ENCODE measurements at regions of chr17 and their contacts with region 1.

Region 1: DNA sequence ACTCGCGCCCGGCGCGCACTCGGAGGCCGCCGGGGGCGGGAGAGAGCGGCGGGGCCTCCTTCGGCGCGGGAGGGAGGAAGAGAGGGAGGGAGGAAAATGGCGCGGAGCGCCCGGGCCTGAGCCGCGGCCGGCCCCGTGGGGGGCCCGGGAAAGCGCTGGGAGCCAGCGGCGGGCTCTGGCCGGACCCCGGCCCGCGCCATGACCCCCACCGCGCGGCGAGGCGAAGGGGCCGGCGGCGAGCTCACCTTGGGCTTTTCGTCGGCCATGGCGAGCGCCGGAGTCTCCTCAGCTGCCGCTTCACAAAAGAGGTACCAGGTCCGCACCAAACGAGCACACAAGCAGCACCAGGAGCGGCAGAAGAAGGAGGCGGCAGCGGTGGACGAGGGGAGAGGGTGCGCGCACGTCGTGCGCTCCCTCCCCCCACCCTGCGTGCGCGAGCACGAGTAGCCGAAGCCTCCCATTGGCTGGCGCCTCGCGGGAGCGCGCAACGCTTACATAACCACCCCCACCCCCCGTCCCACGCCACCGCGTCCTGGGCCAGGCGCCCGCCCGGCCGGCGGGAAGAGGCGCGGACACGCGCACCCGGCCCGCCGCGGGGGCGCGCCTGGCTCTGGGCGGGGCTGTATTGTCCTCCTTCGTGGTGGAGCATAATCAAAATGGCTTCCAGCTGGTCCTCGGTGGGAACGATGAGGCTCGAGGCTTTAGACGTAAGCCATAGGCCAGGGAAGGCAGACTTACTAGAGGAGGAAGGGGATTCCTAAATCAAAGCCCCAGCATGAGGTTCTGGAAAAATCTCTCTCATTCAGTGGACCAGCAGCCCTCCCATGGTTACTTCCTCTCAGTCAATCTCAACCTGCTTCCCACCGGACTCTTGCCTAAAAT is at the start of gene SUMO2:
- DNase-seq: peak; percentile 98
- ATAC-seq: peak; percentile 85
- H3K4me3 Mint-ChIP-seq: peak within 1 kb of the TSS; percentile 97
- H3K27ac Mint-ChIP-seq: peak within 1 kb of the TSS; percentile 96
- H3K4me1 Mint-ChIP-seq: peaks cover 45% of the 10 kb centered on the region
- H3K27me3 Mint-ChIP-seq: no peaks in the 10 kb centered on the region
- total RNA-seq, gene SUMO2: 594 to 727 TPM

Region 2: DNA sequence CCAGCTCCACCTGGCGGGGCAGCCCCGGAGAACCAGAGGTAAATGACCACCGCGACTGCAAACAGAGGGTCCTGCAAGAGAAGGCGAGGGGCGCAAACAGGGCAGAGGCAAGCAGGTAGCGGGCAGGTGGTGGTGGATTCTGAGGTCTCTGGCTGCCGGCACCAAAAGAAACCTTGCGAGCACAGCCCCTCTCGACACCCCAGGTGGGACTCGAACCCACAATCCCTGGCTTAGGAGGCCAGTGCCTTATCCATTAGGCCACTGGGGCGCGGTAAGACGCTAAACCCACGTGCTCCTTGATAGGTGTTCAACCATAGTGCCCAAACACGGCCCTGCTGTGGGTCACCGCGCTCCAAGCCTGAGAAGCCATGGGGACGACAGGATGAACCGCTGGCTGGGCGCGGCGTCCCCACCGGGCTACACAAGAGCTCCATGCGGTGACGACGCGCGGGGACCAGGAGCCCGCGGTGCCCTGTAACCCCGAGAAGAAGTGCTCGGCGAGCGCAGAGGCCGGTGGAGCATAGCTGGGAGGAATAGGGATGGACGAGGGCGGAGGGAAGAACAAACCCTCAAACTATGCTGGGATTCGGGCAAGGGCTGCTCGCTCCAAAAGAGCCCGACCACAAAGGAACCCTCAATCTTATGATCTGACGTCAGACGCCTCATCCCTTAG is 148.4 kb before region 1 on chr17:
- CTCF ChIA-PET with region 1: no interaction called
- POLR2A ChIA-PET with region 1: interaction called, 5 read pairs
- intact Hi-C with region 1: loop called (anchors 1 to 10 kb)
- DNase-seq: peak; percentile 96
- ATAC-seq: peak; percentile 65
- H3K4me3 Mint-ChIP-seq: peak overlapping the region; percentile 91
- H3K27ac Mint-ChIP-seq: peak overlapping the region; percentile 96
- H3K4me1 Mint-ChIP-seq: peaks cover 49% of the 10 kb centered on the region
- H3K27me3 Mint-ChIP-seq: no peaks in the 10 kb centered on the region

Region 3: GRCh38 chr17:75131280-75132017 is 51.4 kb before region 1 on chr17 and contains the start of gene NT5C:
- CTCF ChIA-PET with region 1: interaction called, 3 read pairs
- POLR2A ChIA-PET with region 1: no interaction called
- intact Hi-C with region 1: loop called in 1 of 2 experiments (anchors 1 kb)
- DNase-seq: peak; percentile 84
- ATAC-seq: peak; percentile 82
- H3K4me3 Mint-ChIP-seq: peak within 1 kb of the TSS; percentile 83
- H3K27ac Mint-ChIP-seq: peak within 1 kb of the TSS; percentile 90
- H3K4me1 Mint-ChIP-seq: peaks cover 11% of the 10 kb centered on the region
- H3K27me3 Mint-ChIP-seq: no peaks in the 10 kb centered on the region
- total RNA-seq, gene NT5C: 51.7 to 61.5 TPM

Region 4: GRCh38 chr17:75205037-75205792 is 22.4 kb after region 1 on chr17 and contains the start of gene NUP85:
- CTCF ChIA-PET with region 1: interaction called, 42 read pairs
- POLR2A ChIA-PET with region 1: interaction called, 4 read pairs
- intact Hi-C with region 1: loop called (anchors 1 to 2 kb)
- DNase-seq: peak; percentile 96
- ATAC-seq: peak; percentile 86
- H3K4me3 Mint-ChIP-seq: peak within 1 kb of the TSS; percentile 91
- H3K27ac Mint-ChIP-seq: peak within 1 kb of the TSS; percentile 100
- H3K4me1 Mint-ChIP-seq: peaks cover 18% of the 10 kb centered on the region
- H3K27me3 Mint-ChIP-seq: no peaks in the 10 kb centered on the region
- total RNA-seq, gene NUP85: 130 to 160 TPM

Region 5: GRCh38 chr17:75289115-75289831 is 106.5 kb after region 1 on chr17 and contains the start of gene SLC25A19:
- CTCF ChIA-PET with region 1: no interaction called
- POLR2A ChIA-PET with region 1: no interaction called
- intact Hi-C with region 1: loop called in 1 of 2 experiments (anchors 1 kb)
- DNase-seq: peak; percentile 99
- ATAC-seq: peak; percentile 95
- H3K4me3 Mint-ChIP-seq: peak within 1 kb of the TSS; percentile 86
- H3K27ac Mint-ChIP-seq: peak within 1 kb of the TSS; percentile 100
- H3K4me1 Mint-ChIP-seq: peaks cover 28% of the 10 kb centered on the region
- H3K27me3 Mint-ChIP-seq: no peaks in the 10 kb centered on the region
- total RNA-seq, gene SLC25A19: 67.8 to 79.7 TPM

Region 6: GRCh38 chr17:75779231-75779986 is 596.6 kb after region 1 on chr17:
- CTCF ChIA-PET with region 1: no interaction called
- POLR2A ChIA-PET with region 1: no interaction called
- intact Hi-C with region 1: loop called in 1 of 2 experiments (anchors 2 kb)
- DNase-seq: peak; percentile 96
- ATAC-seq: peak; percentile 69
- H3K4me3 Mint-ChIP-seq: peak overlapping the region; percentile 98
- H3K27ac Mint-ChIP-seq: peak overlapping the region; percentile 99
- H3K4me1 Mint-ChIP-seq: peaks cover 46% of the 10 kb centered on the region
- H3K27me3 Mint-ChIP-seq: peaks cover 1% of the 10 kb centered on the region

Measured in activated CD4-positive, alpha-beta T cell treated with anti-CD3 and anti-CD28 coated beads for 36 hours (primary cell).